Activated CD4-positive, alpha-beta T cell treated with anti-CD3 and anti-CD28 coated beads, Interleukin-2, amount 10 ng/mL, durations not matched to agents 24 days and 14 days (primary cell): ENCODE measurements at regions of chr5 and their contacts with region 1.

Region 1: DNA sequence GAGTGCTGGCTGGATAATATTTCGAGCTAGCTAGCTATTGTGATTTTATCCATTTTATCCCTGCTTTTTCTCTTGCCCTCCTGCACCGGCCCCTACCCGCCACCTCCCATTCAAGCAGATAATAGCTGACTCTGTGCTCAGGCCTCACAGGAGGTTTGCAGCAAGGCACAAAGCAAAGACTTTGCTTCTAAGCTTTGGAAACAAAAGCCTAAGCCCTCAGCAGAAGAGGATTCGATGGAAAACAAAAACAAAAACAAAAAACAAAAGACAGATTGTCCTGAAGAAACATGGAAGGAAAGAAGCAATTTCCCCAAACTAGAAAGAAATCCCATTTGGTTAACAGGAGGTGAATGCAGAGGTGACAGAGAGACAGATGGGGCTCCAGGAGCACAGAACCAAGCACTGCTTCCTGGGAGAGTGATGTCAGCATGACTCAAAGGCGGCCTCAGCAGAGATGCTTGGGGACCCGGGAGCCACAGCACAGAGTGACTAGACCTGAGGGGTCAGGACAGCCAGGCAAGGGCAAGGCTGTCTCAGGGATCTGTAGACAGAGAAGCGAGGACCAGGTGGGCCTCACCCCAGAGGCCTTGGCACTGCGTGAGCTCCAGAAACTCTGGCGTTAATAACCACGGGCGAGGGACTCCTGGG is 28.4 kb downstream of the MTX3 start:
- DNase-seq: peak; percentile 67
- H3K4me3 Mint-ChIP-seq: peak overlapping the region; percentile 54
- H3K27ac Mint-ChIP-seq: peak overlapping the region; percentile 90
- H3K4me1 Mint-ChIP-seq: peaks cover 25% of the 10 kb centered on the region
- H3K27me3 Mint-ChIP-seq: peaks cover 3% of the 10 kb centered on the region

Region 2: GRCh38 chr5:79514391-79515105 is 448.2 kb before region 1 on chr5:
- intact Hi-C with region 1: loop called (anchors 10 kb)
- DNase-seq: peak; percentile 97
- H3K4me3 Mint-ChIP-seq: peak overlapping the region; percentile 88
- H3K27ac Mint-ChIP-seq: peak overlapping the region; percentile 97
- H3K4me1 Mint-ChIP-seq: peaks cover 32% of the 10 kb centered on the region
- H3K27me3 Mint-ChIP-seq: peaks cover 23% of the 10 kb centered on the region

Region 3: GRCh38 chr5:79999722-80000121 is 37.0 kb after region 1 on chr5:
- intact Hi-C with region 1: no loop called
- DNase-seq: no peak
- H3K4me3 Mint-ChIP-seq: no peak overlapping the region
- H3K27ac Mint-ChIP-seq: no peak overlapping the region
- H3K4me1 Mint-ChIP-seq: peaks cover 8% of the 10 kb centered on the region
- H3K27me3 Mint-ChIP-seq: peaks cover 3% of the 10 kb centered on the region

Region 4: DNA sequence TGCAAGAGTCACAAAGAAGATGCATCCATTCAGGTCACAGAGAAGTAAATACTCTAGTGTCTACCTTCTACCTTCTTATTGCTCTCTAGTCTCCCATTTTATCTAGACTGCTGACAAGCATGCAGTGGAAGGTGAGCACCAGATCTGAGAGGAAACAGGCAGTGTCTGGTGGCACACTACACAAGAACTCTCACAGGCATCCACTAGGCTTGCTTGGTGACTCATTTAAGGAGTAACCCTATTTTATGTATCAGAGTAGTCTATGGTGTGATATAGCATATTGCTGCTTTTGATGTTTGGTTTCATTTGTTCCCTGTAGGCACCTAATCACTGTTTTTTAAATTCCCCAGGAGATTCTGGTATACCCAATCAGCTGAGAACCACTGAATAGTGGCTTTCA is 70.8 kb after region 1 on chr5:
- intact Hi-C with region 1: loop called (anchors 2 kb)
- DNase-seq: peak; percentile 78
- H3K4me3 Mint-ChIP-seq: no peak overlapping the region
- H3K27ac Mint-ChIP-seq: no peak overlapping the region
- H3K4me1 Mint-ChIP-seq: peaks cover 25% of the 10 kb centered on the region
- H3K27me3 Mint-ChIP-seq: peaks cover 52% of the 10 kb centered on the region